ENCODE measurements at regions of chr20 and their contacts with region 1.

Region 1: GRCh38 chr20:50575847-50576720 is 65.9 kb downstream of the PTPN1 start:
- DNase-seq: peak; percentile 61 to 71
- ATAC-seq: peak; percentile 52 to 75 (median 66)
- H3K4me3 ChIP-seq: no peak overlapping the region
- H3K27ac ChIP-seq: peak overlapping the region in 7 of 10 donors; percentile 2 to 73 (median 38)
- H3K4me1 ChIP-seq: peaks cover 10 to 66% (median 44%) of the 10 kb centered on the region in 9 donors
- H3K27me3 ChIP-seq: no peaks in the 10 kb centered on the region
- CTCF ChIP-seq: peak; percentile 34 to 81 (median 72)

Region 2: DNA sequence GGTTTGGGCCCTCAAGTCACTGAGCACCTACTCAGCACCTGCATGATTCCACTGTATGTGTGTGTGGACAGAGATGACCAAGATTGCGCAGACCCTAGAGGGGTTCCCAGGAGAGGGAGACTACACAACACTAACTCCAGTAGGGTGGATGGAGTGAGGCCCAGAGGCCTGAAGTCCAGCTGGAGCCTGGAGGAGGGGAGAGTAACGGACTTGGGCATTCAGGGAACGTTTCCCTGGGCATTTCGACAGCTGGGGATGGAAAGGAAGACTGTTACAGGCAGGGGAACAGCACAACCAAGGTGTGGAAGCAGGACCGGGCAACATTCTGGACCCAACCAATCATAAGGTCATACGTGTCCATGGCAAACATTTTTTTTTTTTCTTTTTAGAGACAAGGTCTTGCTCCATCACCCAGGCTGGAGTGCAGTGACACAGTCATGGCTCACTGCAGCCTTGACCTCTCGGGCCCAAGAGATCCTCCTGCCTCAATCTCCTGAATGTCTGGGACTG is 396.5 kb before region 1 on chr20:
- intact Hi-C with region 1: loop called in 1 of 10 experiments (anchors 5 kb)
- DNase-seq: no peak
- ATAC-seq: peak in 6 of 8 donors; percentile 4 to 50 (median 34)
- H3K4me3 ChIP-seq: no peak overlapping the region
- H3K27ac ChIP-seq: no peak overlapping the region
- H3K4me1 ChIP-seq: peaks cover 0 to 6% (median 0%) of the 10 kb centered on the region in 9 donors
- H3K27me3 ChIP-seq: no peaks in the 10 kb centered on the region
- CTCF ChIP-seq: peak in 7 of 9 donors; percentile 13 to 52 (median 42)

Region 3: DNA sequence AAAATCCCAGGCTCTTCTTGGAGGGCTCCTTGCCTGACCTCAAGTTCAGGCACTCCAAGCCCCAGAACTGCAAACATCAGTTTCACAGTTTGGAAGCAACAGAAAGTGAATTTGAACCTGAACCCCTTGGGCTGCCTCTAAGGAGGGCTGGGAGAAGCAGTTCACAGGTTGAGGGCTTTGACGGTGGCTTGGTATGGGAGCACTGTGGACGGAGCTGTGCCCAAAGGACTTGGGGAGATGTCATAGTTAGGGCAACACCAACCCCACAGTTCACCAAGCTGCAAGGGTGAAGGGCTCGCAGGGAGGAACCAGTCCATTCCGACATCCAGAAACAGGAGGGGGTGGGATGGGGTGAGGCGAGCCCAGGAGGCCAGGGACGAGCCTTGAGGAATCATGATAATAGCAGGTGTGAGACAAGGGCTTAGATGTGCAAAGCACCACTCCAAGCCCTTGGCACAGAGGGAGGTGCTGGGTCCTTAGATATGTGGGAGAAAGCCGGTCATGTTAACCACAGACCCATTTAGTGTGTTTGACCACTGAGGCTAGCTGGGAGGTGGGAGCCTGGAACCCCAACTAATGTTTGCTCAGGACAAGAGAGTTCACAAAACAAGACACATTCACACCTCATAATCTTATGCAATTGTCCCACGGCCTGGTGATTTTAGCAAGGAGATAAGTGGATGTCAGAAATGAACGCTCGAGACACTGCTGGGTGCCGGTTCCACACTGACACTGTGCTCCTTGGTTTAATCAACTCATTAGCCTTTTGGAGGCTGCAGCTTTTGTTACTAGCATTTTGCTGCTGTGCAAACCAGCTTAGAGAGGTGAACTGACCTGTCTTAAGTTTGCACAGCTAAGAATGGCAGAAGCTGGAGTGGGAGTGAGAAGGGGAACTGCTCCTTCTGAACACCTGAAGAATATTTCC is 381.0 kb before region 1 on chr20:
- intact Hi-C with region 1: no loop called
- DNase-seq: no peak
- ATAC-seq: no peak
- H3K4me3 ChIP-seq: peak overlapping the region in 1 of 10 donors; percentile 94
- H3K27ac ChIP-seq: peak overlapping the region in 6 of 10 donors; percentile 64 to 99 (median 99)
- H3K4me1 ChIP-seq: peaks cover 7 to 32% (median 25%) of the 10 kb centered on the region in 9 donors
- H3K27me3 ChIP-seq: peaks cover 0 to 9% (median 0%) of the 10 kb centered on the region in 7 donors
- CTCF ChIP-seq: no peak

Region 4: DNA sequence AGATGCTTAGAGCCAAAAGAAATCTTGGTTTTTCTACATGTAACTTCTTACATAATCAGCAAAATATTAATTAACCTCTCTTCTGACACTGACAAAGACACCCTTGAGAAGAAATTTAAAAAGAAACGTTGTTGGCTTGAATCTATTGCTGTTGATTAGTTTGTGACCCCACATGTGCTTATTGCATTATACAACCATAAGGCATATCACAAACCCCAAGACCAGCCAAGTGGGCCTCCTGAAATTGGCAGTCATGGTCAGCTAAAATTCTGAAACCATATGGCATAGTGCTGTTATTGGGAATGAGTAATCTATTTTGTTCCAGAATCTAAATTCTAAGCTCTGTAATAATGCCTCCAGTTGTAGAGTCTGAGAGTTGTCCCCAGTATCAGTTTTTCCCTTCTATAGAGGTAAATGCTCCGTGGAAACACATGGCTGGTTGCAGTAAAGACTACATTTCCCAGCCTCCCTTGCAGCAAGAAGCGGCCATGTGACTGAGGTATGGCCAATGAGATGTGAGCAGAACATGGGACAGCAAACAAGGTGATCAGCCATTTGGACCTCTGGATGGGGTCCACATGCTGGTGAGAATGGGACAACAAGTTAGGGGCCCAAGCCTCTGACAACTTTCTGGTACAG is 108.2 kb before region 1 on chr20:
- intact Hi-C with region 1: loop called in 7 of 10 experiments (anchors 2 to 5 kb)
- DNase-seq: no peak
- ATAC-seq: peak in 5 of 8 donors; percentile 40 to 64 (median 43)
- H3K4me3 ChIP-seq: no peak overlapping the region
- H3K27ac ChIP-seq: no peak overlapping the region
- H3K4me1 ChIP-seq: peaks cover 0 to 52% (median 11%) of the 10 kb centered on the region in 9 donors
- H3K27me3 ChIP-seq: no peaks in the 10 kb centered on the region
- CTCF ChIP-seq: no peak

Region 5: GRCh38 chr20:50484276-50484976 is 91.7 kb before region 1 on chr20:
- intact Hi-C with region 1: loop called in 4 of 10 experiments (anchors 5 kb)
- DNase-seq: no peak
- ATAC-seq: no peak
- H3K4me3 ChIP-seq: peak overlapping the region in 7 of 10 donors; percentile 49 to 60 (median 54)
- H3K27ac ChIP-seq: peak overlapping the region in 7 of 10 donors; percentile 75 to 90 (median 86)
- H3K4me1 ChIP-seq: peaks cover 3 to 17% (median 9%) of the 10 kb centered on the region in 9 donors
- H3K27me3 ChIP-seq: no peaks in the 10 kb centered on the region
- CTCF ChIP-seq: peak in 1 of 9 donors; percentile 20

Region 6: DNA sequence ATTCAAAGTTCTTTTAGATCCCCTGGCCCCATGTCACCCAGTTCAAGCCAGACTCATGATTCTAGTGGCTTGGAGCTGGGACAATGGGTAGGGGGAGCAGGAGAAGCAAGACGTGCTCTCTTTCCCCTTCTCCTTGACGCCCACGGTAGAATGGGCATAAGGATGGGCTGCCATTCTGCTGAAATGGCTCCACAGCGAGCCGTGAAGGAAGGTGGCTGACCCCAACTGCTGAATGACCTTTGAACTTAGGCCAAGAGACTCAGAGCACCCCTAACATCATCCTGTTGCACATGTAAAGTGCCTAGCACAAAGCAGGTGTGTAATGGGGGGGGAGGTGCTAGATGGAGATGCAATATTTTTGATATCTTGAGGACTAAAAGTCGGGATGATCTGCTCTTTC is 81.7 kb before region 1 on chr20:
- intact Hi-C with region 1: no loop called
- DNase-seq: no peak
- ATAC-seq: no peak
- H3K4me3 ChIP-seq: no peak overlapping the region
- H3K27ac ChIP-seq: no peak overlapping the region
- H3K4me1 ChIP-seq: peaks cover 0 to 33% (median 0%) of the 10 kb centered on the region in 9 donors
- H3K27me3 ChIP-seq: no peaks in the 10 kb centered on the region
- CTCF ChIP-seq: no peak

Region 7: GRCh38 chr20:50509935-50510705 is 66.0 kb before region 1 on chr20 and contains the start of gene PTPN1:
- intact Hi-C with region 1: loop called in 8 of 10 experiments (anchors 2 to 10 kb)
- DNase-seq: peak; percentile 98 to 99
- ATAC-seq: peak; percentile 98 to 99 (median 98)
- H3K4me3 ChIP-seq: peak within 1 kb of the TSS; percentile 82 to 99 (median 97)
- H3K27ac ChIP-seq: peak within 1 kb of the TSS; percentile 70 to 98 (median 92)
- H3K4me1 ChIP-seq: peaks cover 0 to 61% (median 46%) of the 10 kb centered on the region in 9 donors
- H3K27me3 ChIP-seq: no peaks in the 10 kb centered on the region
- CTCF ChIP-seq: peak in 2 of 9 donors; percentile 12 to 16
- total RNA-seq, gene PTPN1: 25.2 to 40.1 (median 29.4) TPM